T-cell (primary cell): ENCODE measurements at regions of chr11 and their contacts with region 1.

Region 1: DNA sequence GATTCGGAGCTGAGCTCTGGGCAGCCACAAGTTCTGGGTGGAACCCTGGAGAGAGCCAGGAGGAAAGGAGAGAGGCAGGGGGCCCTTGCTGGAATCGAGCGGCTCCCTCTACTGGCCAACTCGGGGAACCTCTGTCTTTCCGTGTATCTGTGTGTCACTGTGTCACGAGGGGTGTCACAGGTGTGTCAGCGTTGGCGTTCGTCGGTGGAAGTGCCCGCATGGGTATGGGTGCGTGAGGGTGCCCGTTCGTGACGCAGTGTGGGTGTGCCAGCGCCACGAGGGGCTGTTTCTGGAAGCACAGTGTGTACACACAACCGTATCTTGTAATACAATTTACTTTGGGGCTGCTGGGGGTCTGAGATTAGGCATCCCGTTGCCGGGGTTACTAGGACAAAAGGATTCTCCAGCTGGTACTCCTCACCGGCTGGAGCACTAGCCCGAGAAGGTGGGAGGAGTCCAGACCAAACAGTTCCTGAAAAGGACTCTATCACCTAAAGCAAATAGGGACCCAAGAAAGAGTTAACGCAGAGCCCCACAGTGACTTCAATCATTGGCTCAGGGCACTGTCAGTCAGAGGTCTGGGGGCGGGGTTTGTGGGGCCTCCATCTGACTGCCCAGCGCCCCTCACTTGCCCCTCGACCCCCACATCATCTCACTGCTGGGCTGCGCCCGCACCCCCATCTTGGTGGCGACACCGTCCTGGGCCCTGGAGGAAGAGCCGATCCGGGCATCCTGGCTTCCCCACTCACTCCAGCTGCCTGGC is 2.6 kb upstream of the BCL9L start:
- DNase-seq: peak; percentile 89 to 99 (median 97)
- ATAC-seq: peak; percentile 58 to 73 (median 64)
- H3K4me3 ChIP-seq: peak overlapping the region; percentile 79 to 86
- H3K4me3 Mint-ChIP-seq: peak overlapping the region; percentile 92 to 94 (median 93)
- H3K27ac ChIP-seq: peak overlapping the region; percentile 99
- H3K27ac Mint-ChIP-seq: peak overlapping the region; percentile 98 to 99
- H3K4me1 ChIP-seq: peaks cover 24 to 56% of the 10 kb centered on the region in 2 experiments
- H3K4me1 Mint-ChIP-seq: peaks cover 41 to 55% (median 50%) of the 10 kb centered on the region in 3 donors
- H3K27me3 ChIP-seq: no peaks in the 10 kb centered on the region
- H3K27me3 Mint-ChIP-seq: no peaks in the 10 kb centered on the region

Region 2: DNA sequence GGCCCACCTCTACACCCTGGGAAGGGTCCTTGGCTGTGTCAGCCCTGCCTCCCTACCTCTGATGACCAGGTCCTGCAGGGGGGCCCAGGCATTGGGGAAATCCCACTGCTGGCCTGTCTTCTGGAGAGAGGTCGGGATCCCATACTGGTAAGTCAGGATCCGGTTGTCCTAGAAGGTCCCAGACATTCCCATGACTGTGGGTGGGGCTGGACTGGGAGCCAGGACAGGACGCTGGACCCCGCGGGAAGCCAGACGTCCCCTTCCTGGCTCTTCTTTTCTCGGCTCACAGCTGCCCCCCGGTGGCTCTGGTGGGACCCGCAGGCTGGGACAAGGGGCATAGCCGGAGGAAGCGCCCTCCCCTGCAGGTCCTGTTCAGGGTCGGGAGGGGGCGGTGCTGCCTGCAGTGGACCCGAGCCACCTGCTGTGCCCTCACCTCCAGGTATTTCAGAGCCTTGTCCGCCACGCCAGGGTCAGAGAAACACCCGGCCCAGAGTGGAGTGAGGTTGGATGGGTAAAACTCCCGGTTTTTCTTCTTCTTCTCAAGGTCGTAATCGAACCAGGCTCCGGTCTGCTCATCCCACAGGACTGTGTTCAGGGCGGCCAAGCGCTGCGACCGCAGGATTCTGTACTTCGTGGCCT is 268.9 kb before region 1 on chr11:
- CTCF ChIA-PET with region 1: no interaction called
- POLR2A ChIA-PET with region 1: no interaction called
- DNase-seq: peak; percentile 74 to 93 (median 86)
- ATAC-seq: peak; percentile 97 to 100 (median 99)
- H3K4me3 ChIP-seq: no peak overlapping the region
- H3K4me3 Mint-ChIP-seq: peak overlapping the region in 1 of 3 donors; percentile 36
- H3K27ac ChIP-seq: no peak overlapping the region
- H3K27ac Mint-ChIP-seq: no peak overlapping the region
- H3K4me1 ChIP-seq: peaks cover 0 to 11% of the 10 kb centered on the region in 2 experiments
- H3K4me1 Mint-ChIP-seq: peaks cover 3 to 12% (median 6%) of the 10 kb centered on the region in 3 donors
- H3K27me3 ChIP-seq: peaks cover 0 to 25% of the 10 kb centered on the region in 2 experiments
- H3K27me3 Mint-ChIP-seq: no peaks in the 10 kb centered on the region

Region 3: DNA sequence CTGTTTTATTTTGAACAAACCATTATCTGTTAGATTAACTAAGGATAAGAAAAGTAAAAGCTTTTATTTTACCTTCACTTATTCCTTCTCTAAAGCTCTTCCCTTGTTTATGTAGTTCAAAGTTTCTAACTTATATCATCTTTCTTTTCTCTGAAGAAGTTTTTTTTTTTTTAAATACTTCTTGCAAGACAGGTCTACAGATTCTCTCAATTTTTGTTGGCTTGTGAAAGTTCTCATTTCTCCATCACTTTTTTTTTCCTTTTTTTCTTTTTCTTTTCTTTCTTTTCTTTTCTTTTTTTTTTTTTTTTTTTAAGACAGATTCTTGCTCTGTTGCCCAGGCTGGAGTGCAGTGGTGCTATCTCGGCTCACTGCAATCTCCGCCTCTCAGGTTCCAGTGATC is 244.1 kb before region 1 on chr11:
- CTCF ChIA-PET with region 1: no interaction called
- POLR2A ChIA-PET with region 1: interaction called in 1 of 2 experiments, 11 read pairs
- DNase-seq: no peak
- ATAC-seq: no peak
- H3K4me3 ChIP-seq: no peak overlapping the region
- H3K4me3 Mint-ChIP-seq: no peak overlapping the region
- H3K27ac ChIP-seq: no peak overlapping the region
- H3K27ac Mint-ChIP-seq: no peak overlapping the region
- H3K4me1 ChIP-seq: peaks cover 0 to 4% of the 10 kb centered on the region in 2 experiments
- H3K4me1 Mint-ChIP-seq: peaks cover 0 to 11% (median 10%) of the 10 kb centered on the region in 3 donors
- H3K27me3 ChIP-seq: peaks cover 0 to 23% of the 10 kb centered on the region in 2 experiments
- H3K27me3 Mint-ChIP-seq: peaks cover 0 to 2% of the 10 kb centered on the region in 2 donors

Region 4: DNA sequence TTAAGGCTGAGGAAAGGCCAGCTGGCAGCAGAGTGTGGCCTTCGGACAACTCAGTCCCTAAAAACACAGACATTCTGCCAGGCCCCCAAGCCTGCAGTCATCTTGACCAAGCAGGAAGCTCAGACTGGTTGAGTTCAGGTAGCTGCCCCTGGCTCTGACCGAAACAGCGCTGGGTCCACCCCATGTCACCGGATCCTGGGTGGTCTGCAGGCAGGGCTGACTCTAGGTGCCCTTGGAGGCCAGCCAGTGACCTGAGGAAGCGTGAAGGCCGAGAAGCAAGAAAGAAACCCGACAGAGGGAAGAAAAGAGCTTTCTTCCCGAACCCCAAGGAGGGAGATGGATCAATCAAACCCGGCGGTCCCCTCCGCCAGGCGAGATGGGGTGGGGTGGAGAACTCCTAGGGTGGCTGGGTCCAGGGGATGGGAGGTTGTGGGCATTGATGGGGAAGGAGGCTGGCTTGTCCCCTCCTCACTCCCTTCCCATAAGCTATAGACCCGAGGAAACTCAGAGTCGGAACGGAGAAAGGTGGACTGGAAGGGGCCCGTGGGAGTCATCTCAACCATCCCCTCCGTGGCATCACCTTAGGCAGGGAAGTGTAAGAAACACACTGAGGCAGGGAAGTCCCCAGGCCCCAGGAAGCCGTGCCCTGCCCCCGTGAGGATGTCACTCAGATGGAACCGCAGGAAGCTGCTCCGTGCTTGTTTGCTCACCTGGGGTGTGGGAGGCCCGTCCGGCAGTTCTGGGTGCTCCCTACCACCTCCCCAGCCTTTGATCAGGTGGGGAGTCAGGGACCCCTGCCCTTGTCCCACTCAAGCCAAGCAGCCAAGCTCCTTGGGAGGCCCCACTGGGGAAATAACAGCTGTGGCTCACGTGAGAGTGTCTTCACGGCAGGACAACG is 32.9 kb before region 1 on chr11:
- CTCF ChIA-PET with region 1: interaction called, 3 to 4 read pairs
- POLR2A ChIA-PET with region 1: interaction called in 1 of 2 experiments, 12 read pairs
- DNase-seq: peak; percentile 58 to 90 (median 79)
- ATAC-seq: peak; percentile 60 to 78 (median 67)
- H3K4me3 ChIP-seq: peak overlapping the region; percentile 13 to 52
- H3K4me3 Mint-ChIP-seq: peak overlapping the region; percentile 66 to 88 (median 66)
- H3K27ac ChIP-seq: peak overlapping the region; percentile 92
- H3K27ac Mint-ChIP-seq: peak overlapping the region; percentile 97 to 99
- H3K4me1 ChIP-seq: peaks cover 40 to 99% of the 10 kb centered on the region in 2 experiments
- H3K4me1 Mint-ChIP-seq: peaks cover 78 to 83% (median 82%) of the 10 kb centered on the region in 3 donors
- H3K27me3 ChIP-seq: no peaks in the 10 kb centered on the region
- H3K27me3 Mint-ChIP-seq: no peaks in the 10 kb centered on the region

Region 5: GRCh38 chr11:118914178-118914918 is 13.9 kb before region 1 on chr11:
- CTCF ChIA-PET with region 1: interaction called, 6 to 30 read pairs
- POLR2A ChIA-PET with region 1: interaction called, 13 to 18 read pairs
- DNase-seq: peak; percentile 68 to 90 (median 83)
- ATAC-seq: peak; percentile 63 to 66 (median 64)
- H3K4me3 ChIP-seq: peak overlapping the region; percentile 42 to 55
- H3K4me3 Mint-ChIP-seq: peak overlapping the region; percentile 78 to 93 (median 81)
- H3K27ac ChIP-seq: peak overlapping the region; percentile 95
- H3K27ac Mint-ChIP-seq: peak overlapping the region; percentile 96 to 98
- H3K4me1 ChIP-seq: peaks cover 65 to 100% of the 10 kb centered on the region in 2 experiments
- H3K4me1 Mint-ChIP-seq: peaks cover 70 to 87% (median 77%) of the 10 kb centered on the region in 3 donors
- H3K27me3 ChIP-seq: no peaks in the 10 kb centered on the region
- H3K27me3 Mint-ChIP-seq: no peaks in the 10 kb centered on the region